Activated CD4-positive, alpha-beta memory T cell treated with anti-CD3 and anti-CD28 coated beads, Interleukin-2, amount 10 ng/mL, durations not matched to agents 7 days and 5 days (primary cell): ENCODE measurements at regions of chr4 and their contacts with region 1.

Region 1: GRCh38 chr4:56050625-56051024 is 101.9 kb downstream of the CEP135 start:
- DNase-seq: no peak
- H3K4me3 Mint-ChIP-seq: no peak overlapping the region
- H3K27ac Mint-ChIP-seq: no peak overlapping the region
- H3K4me1 Mint-ChIP-seq: peaks cover 12% of the 10 kb centered on the region
- H3K27me3 Mint-ChIP-seq: peaks cover 46% of the 10 kb centered on the region

Region 2: DNA sequence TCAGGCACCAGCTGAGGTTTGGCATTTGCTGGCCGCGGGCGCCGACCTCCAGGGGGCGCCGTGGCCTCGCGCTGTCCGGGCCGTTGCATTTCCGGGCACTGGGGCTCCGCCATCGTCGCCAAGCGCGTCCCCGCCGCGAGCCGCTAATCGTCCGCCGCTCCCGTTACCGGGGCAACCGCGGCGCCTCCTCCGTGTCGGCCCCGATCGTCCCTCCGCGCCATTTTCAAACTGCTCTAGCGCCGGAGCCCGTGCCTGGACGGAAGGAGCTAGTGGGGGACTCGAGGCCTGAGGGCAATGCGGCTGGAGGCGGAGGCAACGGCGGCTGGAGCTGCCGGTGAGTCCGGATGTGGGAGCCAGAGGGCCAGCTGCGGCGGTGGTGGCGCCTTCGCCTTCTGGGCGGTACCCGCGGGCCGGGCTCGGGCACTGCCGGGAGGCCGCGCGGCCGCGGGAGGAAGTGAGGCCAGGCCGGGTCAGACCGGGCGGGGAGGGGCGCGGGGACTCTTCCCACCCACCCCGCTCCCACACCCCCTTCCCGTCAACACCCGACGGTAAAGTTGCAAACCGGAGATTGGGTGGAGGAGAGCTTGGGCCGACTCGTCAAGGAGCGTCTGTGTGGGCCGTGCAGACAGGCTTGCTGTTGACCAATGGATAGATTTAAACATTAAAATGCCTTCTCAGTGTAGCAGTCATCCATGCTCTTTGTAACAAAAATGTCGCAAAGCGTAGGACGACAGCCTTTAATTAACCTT is 101.7 kb before region 1 on chr4 and contains the start of gene CEP135:
- CTCF ChIA-PET with region 1: interaction called, 3 read pairs
- POLR2A ChIA-PET with region 1: interaction called, 10 read pairs
- DNase-seq: peak; percentile 95
- H3K4me3 Mint-ChIP-seq: peak within 1 kb of the TSS; percentile 78
- H3K27ac Mint-ChIP-seq: peak within 1 kb of the TSS; percentile 94
- H3K4me1 Mint-ChIP-seq: peaks cover 46% of the 10 kb centered on the region
- H3K27me3 Mint-ChIP-seq: no peaks in the 10 kb centered on the region
- total RNA-seq, gene CEP135: 18.0 to 18.8 TPM